ENCODE measurements at regions of chr3 and their contacts with region 1.

Region 1: GRCh38 chr3:56339671-56340070 is 128.6 kb downstream of the ERC2 start:
- DNase-seq: no peak
- ATAC-seq: no peak
- H3K4me3 ChIP-seq: no peak overlapping the region
- H3K27ac ChIP-seq: no peak overlapping the region
- H3K4me1 ChIP-seq: no peaks in the 10 kb centered on the region
- H3K27me3 ChIP-seq: no peaks in the 10 kb centered on the region
- CTCF ChIP-seq: no peak

Region 2: GRCh38 chr3:56314842-56315241 is 24.8 kb before region 1 on chr3:
- intact Hi-C with region 1: no loop called
- DNase-seq: peak in 1 of 2 donors; percentile 29
- ATAC-seq: peak; percentile 47 to 97 (median 94)
- H3K4me3 ChIP-seq: no peak overlapping the region
- H3K27ac ChIP-seq: no peak overlapping the region
- H3K4me1 ChIP-seq: peaks cover 6% of the 10 kb centered on the region
- H3K27me3 ChIP-seq: no peaks in the 10 kb centered on the region
- CTCF ChIP-seq: no peak

Region 3: DNA sequence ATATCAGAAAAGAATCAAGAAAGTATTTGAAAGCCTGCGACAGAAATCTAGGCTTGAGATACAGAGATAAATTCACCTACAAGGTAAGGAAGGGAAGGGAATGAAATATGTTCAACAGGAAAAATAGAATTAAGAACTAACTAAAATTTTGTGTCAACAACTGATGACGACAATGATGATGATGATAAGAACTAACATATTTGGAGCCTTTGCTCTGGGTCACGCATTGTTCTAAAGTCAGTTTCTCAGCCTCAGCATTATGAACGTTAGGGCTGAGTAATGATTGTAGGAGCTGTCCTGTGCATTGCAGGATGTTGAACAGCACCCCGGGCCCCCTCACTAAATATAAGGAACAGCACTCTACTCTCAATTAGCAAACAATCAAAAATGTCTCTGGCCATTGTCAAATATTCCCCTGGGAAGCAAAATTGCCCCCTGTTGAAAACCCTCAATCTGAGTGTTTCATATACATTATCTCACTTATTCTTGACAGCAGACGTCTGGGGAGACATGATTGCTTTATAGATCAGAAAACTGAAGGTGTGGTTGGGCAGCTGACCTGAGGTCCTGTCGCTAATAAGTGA is 40.1 kb after region 1 on chr3:
- intact Hi-C with region 1: no loop called
- DNase-seq: no peak
- ATAC-seq: no peak
- H3K4me3 ChIP-seq: no peak overlapping the region
- H3K27ac ChIP-seq: no peak overlapping the region
- H3K4me1 ChIP-seq: no peaks in the 10 kb centered on the region
- H3K27me3 ChIP-seq: peaks cover 0 to 3% (median 0%) of the 10 kb centered on the region in 3 donors
- CTCF ChIP-seq: no peak

Region 4: GRCh38 chr3:56494686-56495322 is 155.1 kb after region 1 on chr3:
- intact Hi-C with region 1: loop called in 1 of 2 experiments (anchors 2 kb)
- DNase-seq: peak; percentile 68 to 81
- ATAC-seq: peak; percentile 83 to 90 (median 89)
- H3K4me3 ChIP-seq: no peak overlapping the region
- H3K27ac ChIP-seq: no peak overlapping the region
- H3K4me1 ChIP-seq: no peaks in the 10 kb centered on the region
- H3K27me3 ChIP-seq: peaks cover 0 to 2% (median 0%) of the 10 kb centered on the region in 3 donors
- CTCF ChIP-seq: peak; percentile 84

Region 5: GRCh38 chr3:57169872-57170623 is 830.4 kb after region 1 on chr3:
- intact Hi-C with region 1: no loop called
- DNase-seq: peak; percentile 82 to 86
- ATAC-seq: peak; percentile 76 to 92 (median 83)
- H3K4me3 ChIP-seq: peak overlapping the region; percentile 64
- H3K27ac ChIP-seq: no peak overlapping the region
- H3K4me1 ChIP-seq: no peaks in the 10 kb centered on the region
- H3K27me3 ChIP-seq: no peaks in the 10 kb centered on the region
- CTCF ChIP-seq: peak; percentile 83